ENCODE measurements at regions of chr15 and their contacts with region 1.

Region 1: DNA sequence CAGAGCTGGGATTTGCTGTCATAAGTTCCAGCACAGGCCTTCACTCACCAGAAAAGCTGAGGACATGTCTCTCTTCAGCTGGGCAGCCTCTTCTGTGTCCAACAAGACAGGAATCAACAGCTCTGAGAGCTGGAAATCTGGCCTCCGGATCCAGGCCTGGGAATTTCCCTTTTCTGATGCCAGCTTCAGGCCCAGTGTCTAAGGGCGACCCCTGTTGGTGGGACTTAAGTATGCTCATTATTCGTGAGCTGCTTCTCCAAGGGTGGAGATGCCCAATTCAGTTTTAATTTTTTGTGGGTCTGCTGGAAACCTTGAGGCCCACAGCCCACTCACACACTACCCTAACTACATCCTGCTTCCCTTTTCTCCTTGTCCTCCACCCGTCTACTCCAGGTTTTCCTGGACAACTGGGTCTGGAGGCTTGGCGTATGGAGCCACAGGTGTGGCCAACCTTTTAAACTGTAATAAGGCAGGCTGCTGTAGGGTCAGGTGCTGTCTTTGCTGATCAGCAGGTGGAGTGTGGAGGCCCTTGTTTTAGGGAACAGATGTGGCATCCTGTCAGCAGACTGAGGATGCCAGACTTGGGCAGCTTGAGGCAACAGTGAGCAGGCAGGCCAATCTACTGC is 2.6 kb upstream of the CEMIP start:
- DNase-seq: peak; percentile 73
- H3K4me3 Mint-ChIP-seq: no peak overlapping the region
- H3K27ac Mint-ChIP-seq: no peak overlapping the region
- H3K4me1 Mint-ChIP-seq: peaks cover 11% of the 10 kb centered on the region
- H3K27me3 Mint-ChIP-seq: peaks cover 36% of the 10 kb centered on the region

Region 2: DNA sequence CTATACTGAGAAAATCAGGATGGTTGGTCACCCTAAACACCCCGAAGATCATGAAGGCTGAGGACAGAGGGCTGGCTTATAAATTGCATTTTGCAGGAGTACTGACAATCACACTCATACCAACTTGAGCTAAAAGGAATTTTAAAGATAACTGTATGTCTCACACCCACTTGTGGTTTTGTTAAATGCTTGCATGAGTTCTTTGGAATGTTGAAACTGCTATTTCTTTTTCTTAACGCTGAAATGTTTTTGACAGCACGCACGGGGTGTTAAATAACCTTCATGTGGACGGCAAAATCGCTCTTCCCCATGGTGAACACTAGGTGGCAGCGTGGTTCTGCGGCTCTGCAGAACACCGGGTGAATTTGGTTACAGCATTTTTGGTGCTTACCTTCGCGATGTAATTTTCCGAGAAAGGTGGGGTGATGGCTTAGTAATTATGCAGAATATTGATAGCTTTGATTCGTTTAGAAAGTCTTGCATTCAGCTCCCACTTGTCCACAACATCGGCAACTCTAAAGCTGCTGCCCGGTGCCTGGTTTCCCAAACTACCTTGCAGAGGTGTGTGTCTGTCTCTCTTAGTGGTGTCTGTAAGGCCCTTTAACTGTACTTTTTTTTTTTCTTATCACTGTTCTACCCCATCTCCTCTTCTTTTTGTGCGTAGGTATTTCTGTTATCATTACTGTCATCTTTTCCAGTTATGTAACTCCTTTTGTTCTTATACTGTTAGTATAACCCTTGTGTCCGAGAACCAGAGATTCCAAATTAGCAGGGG is 320.7 kb before region 1 on chr15:
- CTCF ChIA-PET with region 1: interaction called, 95 read pairs
- POLR2A ChIA-PET with region 1: no interaction called
- intact Hi-C with region 1: loop called (anchors 1 kb)
- DNase-seq: peak; percentile 67
- H3K4me3 Mint-ChIP-seq: no peak overlapping the region
- H3K27ac Mint-ChIP-seq: no peak overlapping the region
- H3K4me1 Mint-ChIP-seq: peaks cover 5% of the 10 kb centered on the region
- H3K27me3 Mint-ChIP-seq: peaks cover 12% of the 10 kb centered on the region

Region 3: GRCh38 chr15:80567721-80568157 is 208.8 kb before region 1 on chr15:
- CTCF ChIA-PET with region 1: interaction called, 68 read pairs
- POLR2A ChIA-PET with region 1: no interaction called
- intact Hi-C with region 1: loop called (anchors 1 kb)
- DNase-seq: peak; percentile 29
- H3K4me3 Mint-ChIP-seq: no peak overlapping the region
- H3K27ac Mint-ChIP-seq: no peak overlapping the region
- H3K4me1 Mint-ChIP-seq: peaks cover 3% of the 10 kb centered on the region
- H3K27me3 Mint-ChIP-seq: peaks cover 25% of the 10 kb centered on the region

Region 4: GRCh38 chr15:80789296-80789695 is 12.8 kb after region 1 on chr15:
- CTCF ChIA-PET with region 1: interaction called, 18 read pairs
- POLR2A ChIA-PET with region 1: no interaction called
- intact Hi-C with region 1: no loop called
- DNase-seq: no peak
- H3K4me3 Mint-ChIP-seq: no peak overlapping the region
- H3K27ac Mint-ChIP-seq: no peak overlapping the region
- H3K4me1 Mint-ChIP-seq: no peaks in the 10 kb centered on the region
- H3K27me3 Mint-ChIP-seq: peaks cover 3% of the 10 kb centered on the region

Region 5: GRCh38 chr15:80804965-80805495 is 28.5 kb after region 1 on chr15:
- CTCF ChIA-PET with region 1: interaction called, 22 read pairs
- POLR2A ChIA-PET with region 1: interaction called, 3 read pairs
- intact Hi-C with region 1: no loop called
- DNase-seq: peak; percentile 46
- H3K4me3 Mint-ChIP-seq: peak overlapping the region; percentile 11
- H3K27ac Mint-ChIP-seq: peak overlapping the region; percentile 55
- H3K4me1 Mint-ChIP-seq: peaks cover 26% of the 10 kb centered on the region
- H3K27me3 Mint-ChIP-seq: no peaks in the 10 kb centered on the region

Region 6: DNA sequence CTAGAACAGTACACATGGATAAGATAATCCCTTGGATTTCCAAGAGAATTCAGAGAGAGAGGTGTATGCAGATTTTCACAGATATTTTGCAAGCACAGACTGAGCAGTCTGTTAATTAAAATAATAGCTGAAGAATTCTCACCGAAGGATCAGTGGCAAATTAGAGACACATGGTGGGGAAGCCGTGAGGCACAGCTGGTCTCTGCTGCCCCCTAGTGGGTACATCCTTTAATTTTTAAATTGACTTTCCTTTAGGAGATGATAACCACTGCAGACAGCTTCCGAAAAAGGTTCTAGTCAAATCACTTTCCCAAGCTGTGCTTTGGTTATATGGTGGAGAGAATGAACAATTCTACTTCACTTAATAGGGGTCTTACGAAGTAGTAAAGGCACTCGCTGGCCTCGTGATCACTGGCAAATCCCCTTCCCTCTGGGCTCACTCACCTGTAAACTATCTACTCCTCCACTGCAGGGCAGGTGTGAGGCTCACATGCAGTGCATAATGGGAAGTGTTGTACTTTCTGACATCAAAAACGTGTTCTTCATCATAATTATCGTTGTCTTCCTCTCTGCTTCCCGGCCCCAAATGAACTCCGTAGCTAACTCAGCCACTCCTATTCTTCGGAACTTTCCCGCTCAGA is 193.6 kb after region 1 on chr15:
- CTCF ChIA-PET with region 1: interaction called, 80 read pairs
- POLR2A ChIA-PET with region 1: no interaction called
- intact Hi-C with region 1: loop called (anchors 1 kb)
- DNase-seq: peak; percentile 67
- H3K4me3 Mint-ChIP-seq: no peak overlapping the region
- H3K27ac Mint-ChIP-seq: no peak overlapping the region
- H3K4me1 Mint-ChIP-seq: peaks cover 9% of the 10 kb centered on the region
- H3K27me3 Mint-ChIP-seq: no peaks in the 10 kb centered on the region

Measured in activated CD4-positive, alpha-beta memory T cell treated with anti-CD3 and anti-CD28 coated beads for 36 hours (primary cell).